Cardiac septum (tissue), 1 donor: ENCODE measurements at regions of chr7 and their contacts with region 1.

Region 1: GRCh38 chr7:74569501-74570075 is 87.9 kb upstream of the GTF2I start:
- DNase-seq: no peak

Region 2: DNA sequence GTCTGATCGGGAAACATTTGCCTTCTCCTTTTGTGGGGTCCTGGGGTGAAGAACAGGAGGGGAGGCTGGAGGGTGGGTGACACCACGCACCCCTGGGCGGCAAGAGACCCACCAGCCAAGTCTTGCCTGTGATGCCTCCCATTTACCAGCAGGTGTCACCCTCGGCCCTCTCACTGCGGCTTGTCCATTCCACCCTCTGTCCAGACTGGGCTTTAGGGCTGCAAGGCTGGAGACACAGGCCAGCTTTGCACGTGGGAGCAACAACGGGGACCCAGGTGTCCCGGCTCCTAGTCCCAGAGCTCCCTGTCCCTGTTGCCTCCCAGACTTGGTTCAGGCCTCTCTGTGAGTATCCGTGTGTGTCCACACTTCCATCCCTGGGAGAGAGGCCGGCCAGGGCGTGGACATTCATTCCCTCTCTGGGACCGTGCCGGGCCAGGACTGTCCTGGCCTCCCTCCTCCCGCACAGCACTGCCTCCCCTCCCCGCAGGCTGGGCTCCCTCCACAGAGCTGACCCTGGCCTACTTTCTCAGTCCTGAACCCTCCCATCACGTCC is 152.1 kb before region 1 on chr7:
- intact Hi-C with region 1: loop called (anchors 2 kb)
- DNase-seq: peak; percentile 86

Region 3: GRCh38 chr7:74449809-74450397 is 119.7 kb before region 1 on chr7:
- intact Hi-C with region 1: loop called (anchors 10 kb)
- DNase-seq: no peak